ENCODE measurements at regions of chr10 and their contacts with region 1.

Region 1: DNA sequence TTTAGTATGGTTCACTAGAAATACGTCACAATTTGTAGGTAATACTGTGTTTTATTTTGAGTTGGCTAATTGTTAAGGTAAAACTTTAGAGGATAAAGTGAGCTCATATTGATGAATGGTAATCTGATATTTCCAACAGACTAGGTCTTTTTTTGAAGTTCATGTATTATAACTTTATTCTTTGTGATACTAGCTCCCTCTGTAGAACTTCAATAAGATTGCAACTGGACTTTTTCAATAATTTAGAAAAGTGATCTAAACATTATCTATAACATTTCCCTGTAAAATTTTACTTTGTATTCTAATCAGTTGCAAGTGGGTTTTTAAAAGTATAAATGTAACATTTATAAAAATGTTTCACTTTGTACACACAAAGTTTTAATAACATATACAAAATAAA is 83.5 kb downstream of the ADK start:
- DNase-seq: no peak
- CTCF ChIP-seq: no peak

Region 2: GRCh38 chr10:74137992-74138391 is 96.6 kb before region 1 on chr10:
- in situ Hi-C with region 1: loop called (anchors 10 kb)
- DNase-seq: no peak
- CTCF ChIP-seq: no peak

Measured in GM13976 (cell line).